ENCODE measurements at regions of chr2 and their contacts with region 1.

Region 1: DNA sequence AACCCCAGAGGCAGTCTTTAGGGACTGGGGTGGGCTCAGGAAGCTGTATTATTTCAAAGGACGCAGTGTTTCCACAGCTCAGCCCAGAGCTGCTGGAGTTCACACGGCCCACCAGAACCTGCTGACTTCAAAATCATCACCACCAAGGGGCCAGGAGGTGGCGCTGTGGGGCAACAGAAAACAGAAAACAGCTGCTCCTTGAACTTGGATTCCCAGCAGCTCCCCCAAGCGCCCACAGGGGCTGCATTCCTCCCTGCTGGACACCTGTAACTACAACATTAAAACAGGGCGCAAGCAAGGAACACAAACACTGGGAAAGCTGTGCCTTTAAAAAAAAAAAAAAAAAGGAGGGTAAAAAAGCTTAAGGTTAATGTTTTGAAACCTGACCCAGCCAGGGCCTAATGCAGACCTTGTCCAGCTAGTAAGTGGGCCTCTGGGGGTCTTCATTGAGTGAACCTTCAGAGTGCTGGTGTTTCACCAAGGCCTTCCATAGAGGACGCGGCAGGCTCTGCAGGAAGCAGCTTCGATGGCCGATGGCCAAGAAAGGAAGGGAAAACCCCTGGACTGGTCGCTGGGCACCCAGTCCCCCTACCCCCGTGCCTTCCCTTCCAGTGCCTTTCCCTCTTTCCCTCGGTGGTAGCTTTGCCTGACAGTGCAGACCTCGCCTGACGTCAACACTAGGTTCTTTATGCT is 25.9 kb downstream of the MLPH start:
- DNase-seq: peak; percentile 85 to 89 (median 86)
- ATAC-seq: peak; percentile 38 to 73 (median 69)
- H3K4me3 ChIP-seq: no peak overlapping the region
- H3K27ac ChIP-seq: peak overlapping the region in 11 of 12 donors; percentile 60 to 96 (median 81)
- H3K4me1 ChIP-seq: peaks cover 0 to 60% (median 39%) of the 10 kb centered on the region in 12 donors
- H3K27me3 ChIP-seq: no peaks in the 10 kb centered on the region
- CTCF ChIP-seq: peak; percentile 76 to 94 (median 92)
- POLR2A ChIP-seq: no peak

Region 2: GRCh38 chr2:237092920-237093781 is 419.8 kb before region 1 on chr2:
- intact Hi-C with region 1: loop called in 1 of 10 experiments (anchors 5 kb)
- DNase-seq: peak in 3 of 5 donors; percentile 40 to 52 (median 43)
- ATAC-seq: peak; percentile 55 to 82 (median 77)
- H3K4me3 ChIP-seq: no peak overlapping the region
- H3K27ac ChIP-seq: peak overlapping the region in 5 of 12 donors; percentile 18 to 56 (median 53)
- H3K4me1 ChIP-seq: peaks cover 0 to 35% (median 19%) of the 10 kb centered on the region in 12 donors
- H3K27me3 ChIP-seq: no peaks in the 10 kb centered on the region
- CTCF ChIP-seq: peak; percentile 14 to 62 (median 48)
- POLR2A ChIP-seq: no peak

Region 3: GRCh38 chr2:237465515-237466218 is 47.3 kb before region 1 on chr2:
- intact Hi-C with region 1: no loop called
- DNase-seq: no peak
- ATAC-seq: no peak
- H3K4me3 ChIP-seq: no peak overlapping the region
- H3K27ac ChIP-seq: peak overlapping the region in 1 of 12 donors; percentile 24
- H3K4me1 ChIP-seq: no peaks in the 10 kb centered on the region
- H3K27me3 ChIP-seq: no peaks in the 10 kb centered on the region
- CTCF ChIP-seq: no peak
- POLR2A ChIP-seq: no peak

Region 4: GRCh38 chr2:237572021-237572741 is 59.3 kb after region 1 on chr2:
- intact Hi-C with region 1: loop called (anchors 1 to 2 kb)
- DNase-seq: peak; percentile 91 to 95 (median 93)
- ATAC-seq: peak; percentile 83 to 94 (median 90)
- H3K4me3 ChIP-seq: peak overlapping the region in 3 of 12 donors; percentile 3 to 31 (median 22)
- H3K27ac ChIP-seq: no peak overlapping the region
- H3K4me1 ChIP-seq: peaks cover 0 to 29% (median 12%) of the 10 kb centered on the region in 12 donors
- H3K27me3 ChIP-seq: no peaks in the 10 kb centered on the region
- CTCF ChIP-seq: peak; percentile 95 to 100 (median 98)
- POLR2A ChIP-seq: no peak

Region 5: DNA sequence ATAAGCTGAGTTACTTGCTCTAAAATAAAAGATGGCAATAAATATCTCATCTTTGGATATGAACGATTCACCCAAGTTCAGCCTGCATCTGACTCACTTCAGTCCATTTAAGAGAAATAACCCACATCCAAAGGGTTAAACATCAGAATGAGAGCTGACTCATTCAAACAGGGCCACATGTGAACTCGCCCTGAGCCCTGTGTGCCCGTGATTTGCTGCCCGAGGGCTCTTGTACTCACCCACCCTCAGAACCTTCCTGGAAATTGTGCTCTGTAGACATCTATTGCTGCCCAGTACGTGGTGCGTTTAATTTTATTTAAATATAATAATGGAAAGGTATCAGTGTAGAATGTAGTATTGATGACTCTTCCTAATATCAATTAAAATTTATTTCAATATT is 218.7 kb after region 1 on chr2:
- intact Hi-C with region 1: loop called in 1 of 10 experiments (anchors 10 kb)
- DNase-seq: no peak
- ATAC-seq: peak in 3 of 4 donors; percentile 23 to 49 (median 32)
- H3K4me3 ChIP-seq: peak overlapping the region in 2 of 12 donors; percentile 20 to 48
- H3K27ac ChIP-seq: peak overlapping the region in 11 of 12 donors; percentile 78 to 86 (median 84)
- H3K4me1 ChIP-seq: peaks cover 8 to 100% (median 82%) of the 10 kb centered on the region in 12 donors
- H3K27me3 ChIP-seq: no peaks in the 10 kb centered on the region
- CTCF ChIP-seq: no peak
- POLR2A ChIP-seq: no peak

Region 6: DNA sequence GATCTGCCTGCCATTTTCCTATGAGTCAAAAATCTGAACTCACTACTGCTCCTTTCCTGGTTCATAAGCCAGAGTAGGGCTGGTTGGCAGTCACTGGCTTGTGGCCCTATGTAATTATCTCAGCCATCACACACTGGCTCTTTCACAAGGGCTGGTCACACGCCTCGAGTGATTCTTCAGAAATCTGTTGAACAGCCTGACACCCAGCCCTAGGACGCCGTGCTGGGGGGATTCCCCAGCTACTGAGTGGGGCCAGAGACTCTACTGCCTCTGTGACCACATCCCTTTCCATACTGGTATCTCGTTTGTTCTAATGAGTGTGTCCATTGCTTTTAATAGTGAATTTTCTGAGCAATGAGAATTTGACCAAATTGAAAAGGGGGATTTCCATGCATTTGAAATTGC is 239.8 kb after region 1 on chr2:
- intact Hi-C with region 1: loop called in 3 of 10 experiments (anchors 10 kb)
- DNase-seq: no peak
- ATAC-seq: peak in 2 of 4 donors; percentile 23 to 27
- H3K4me3 ChIP-seq: no peak overlapping the region
- H3K27ac ChIP-seq: peak overlapping the region in 1 of 12 donors; percentile 6
- H3K4me1 ChIP-seq: peaks cover 0 to 10% (median 0%) of the 10 kb centered on the region in 12 donors
- H3K27me3 ChIP-seq: no peaks in the 10 kb centered on the region
- CTCF ChIP-seq: no peak
- POLR2A ChIP-seq: no peak